A549 (cell line): ENCODE measurements at regions of chr7 and their contacts with region 1.

Region 1: DNA sequence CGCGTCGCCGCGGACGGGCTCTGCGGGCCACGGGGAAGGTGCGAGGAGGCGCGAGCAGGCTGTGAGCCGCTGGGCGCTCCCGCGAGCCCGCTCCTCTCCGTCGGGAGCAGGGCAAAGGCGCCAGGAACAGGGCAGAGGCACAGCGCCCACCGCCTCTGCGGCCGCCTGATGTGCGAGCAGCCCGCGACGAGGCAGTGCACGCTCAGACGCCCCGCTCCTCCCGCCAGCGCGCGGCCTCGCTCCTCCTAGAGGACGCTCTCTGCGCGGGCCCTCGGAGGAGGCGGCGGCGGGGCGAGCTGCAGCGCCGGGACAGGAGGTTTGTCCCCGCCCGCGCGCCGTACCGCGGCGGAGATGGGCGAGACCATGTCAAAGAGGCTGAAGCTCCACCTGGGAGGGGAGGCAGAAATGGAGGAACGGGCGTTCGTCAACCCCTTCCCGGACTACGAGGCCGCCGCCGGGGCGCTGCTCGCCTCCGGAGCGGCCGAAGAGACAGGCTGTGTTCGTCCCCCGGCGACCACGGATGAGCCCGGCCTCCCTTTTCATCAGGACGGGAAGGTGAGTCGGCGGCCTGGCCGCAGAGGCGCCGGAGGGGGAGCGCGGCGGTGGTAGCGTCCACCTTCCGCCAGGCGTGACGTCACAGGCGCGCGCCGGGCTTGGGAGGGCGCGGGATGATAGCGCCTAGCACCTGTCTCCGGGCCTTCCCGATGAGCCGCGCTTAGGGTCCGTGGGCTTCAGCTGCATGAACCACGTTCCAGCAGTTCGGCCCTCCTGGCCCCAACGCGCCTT is 731 bp downstream of the LANCL2 start:
- DNase-seq: peak; percentile 76 to 98
- ATAC-seq: peak; percentile 94 to 95
- H3K4me3 ChIP-seq: peak overlapping the region; percentile 83
- H3K27ac ChIP-seq: peak overlapping the region; percentile 99
- H3K4me1 ChIP-seq: peaks cover 13% of the 10 kb centered on the region
- CTCF ChIP-seq: no peak
- EP300 ChIP-seq: no peak
- POLR2A ChIP-seq: peak; percentile 89
- RAD21 ChIP-seq: no peak

Region 2: DNA sequence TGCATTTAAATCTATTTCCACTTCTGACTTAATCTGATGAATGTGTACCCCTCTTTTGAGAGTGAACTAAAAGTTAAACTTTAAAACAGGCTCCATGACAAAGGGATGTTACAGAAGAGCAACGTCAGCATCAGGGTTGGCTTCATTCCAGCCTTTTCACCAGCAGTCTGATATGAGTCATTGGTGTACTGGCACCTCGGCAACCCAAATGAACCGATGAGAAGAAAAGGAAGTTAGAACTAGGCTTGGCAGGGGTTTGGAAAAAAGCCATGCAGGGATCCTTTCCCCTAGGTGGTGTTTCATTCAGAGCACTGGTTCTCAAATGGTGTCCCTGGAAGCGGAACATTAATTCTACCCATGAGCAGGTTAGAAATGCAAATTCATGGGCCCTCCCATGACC is 660.4 kb before region 1 on chr7:
- CTCF ChIA-PET with region 1: no interaction called
- POLR2A ChIA-PET with region 1: no interaction called
- DNase-seq: peak; percentile 51 to 78
- ATAC-seq: peak; percentile 69 to 85; a peak in 5 of 6 replicates
- H3K4me3 ChIP-seq: no peak overlapping the region
- H3K27ac ChIP-seq: no peak overlapping the region
- H3K4me1 ChIP-seq: peaks cover 9% of the 10 kb centered on the region; the same call in 2 of the 3 replicates
- CTCF ChIP-seq: no peak
- EP300 ChIP-seq: no peak
- POLR2A ChIP-seq: no peak
- RAD21 ChIP-seq: no peak

Region 3: GRCh38 chr7:54758702-54759592 is 606.9 kb before region 1 on chr7 and contains the start of gene SEC61G:
- CTCF ChIA-PET with region 1: no interaction called
- POLR2A ChIA-PET with region 1: interaction called, 13 read pairs
- DNase-seq: peak; percentile 93 to 97
- ATAC-seq: peak; percentile 93 to 97
- H3K4me3 ChIP-seq: peak within 1 kb of the TSS; percentile 79
- H3K27ac ChIP-seq: peak within 1 kb of the TSS; percentile 93 to 100
- H3K4me1 ChIP-seq: peaks cover 13% of the 10 kb centered on the region; the same call in 2 of the 3 replicates
- CTCF ChIP-seq: no peak
- EP300 ChIP-seq: no peak
- POLR2A ChIP-seq: peak; percentile 84
- RAD21 ChIP-seq: no peak
- polyA plus RNA-seq, gene SEC61G: 290 and 356 TPM in 2 replicates

Region 4: GRCh38 chr7:55288070-55288824 is 77.6 kb before region 1 on chr7:
- CTCF ChIA-PET with region 1: interaction called, 4 read pairs
- POLR2A ChIA-PET with region 1: interaction called, 12 read pairs
- DNase-seq: no peak
- ATAC-seq: 0 out of 6 replicates have a peak, but pooled peaks of 1 of the 2 experiments have one; percentile 50
- H3K4me3 ChIP-seq: no peak overlapping the region
- H3K27ac ChIP-seq: no peak overlapping the region
- H3K4me1 ChIP-seq: no peaks in the 10 kb centered on the region
- CTCF ChIP-seq: no peak
- EP300 ChIP-seq: no peak
- POLR2A ChIP-seq: no peak
- RAD21 ChIP-seq: no peak

Region 5: DNA sequence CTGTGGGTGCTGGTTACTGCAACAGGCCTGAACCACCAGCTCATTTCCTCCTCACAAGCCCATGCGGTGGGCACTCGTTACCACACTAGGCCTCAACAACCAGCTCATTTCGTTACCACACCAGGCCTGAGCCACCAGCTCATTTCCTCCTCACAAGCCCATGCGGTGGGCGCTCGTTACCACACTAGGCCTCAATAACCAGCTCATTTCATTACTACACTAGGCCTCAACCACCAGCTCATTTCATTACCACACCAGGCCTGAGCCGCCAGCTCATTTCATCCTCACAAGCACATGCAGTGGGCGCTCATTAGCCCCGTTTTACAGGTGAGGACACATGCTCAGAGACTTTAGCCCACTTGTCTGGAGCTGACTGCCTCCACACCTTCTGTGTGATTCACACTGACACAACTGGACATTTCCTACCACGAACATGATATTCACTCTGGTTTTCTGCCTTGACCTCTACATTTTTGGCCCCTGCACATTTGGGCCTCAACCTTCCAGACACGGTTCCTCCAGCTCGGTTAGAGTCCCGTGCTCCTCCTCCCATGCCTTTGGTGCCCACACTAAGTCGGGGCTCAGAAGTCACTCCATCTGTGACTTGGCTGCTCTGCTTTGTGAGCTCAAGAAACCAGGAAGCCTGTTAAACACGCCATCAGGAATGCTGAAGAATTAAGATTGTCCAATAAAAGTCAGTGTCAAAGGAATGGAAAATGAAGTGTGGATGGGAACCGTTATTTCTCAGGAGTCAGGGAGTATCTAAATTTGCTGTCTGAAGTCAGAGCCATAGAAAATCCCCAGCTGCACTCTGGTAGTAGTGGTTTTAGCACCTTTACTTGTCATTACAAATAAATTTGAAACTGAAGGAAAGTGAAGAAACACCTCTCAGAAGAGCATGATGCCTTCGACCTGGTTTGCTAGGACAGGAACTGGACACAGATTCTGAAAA is 56.6 kb before region 1 on chr7:
- CTCF ChIA-PET with region 1: no interaction called
- POLR2A ChIA-PET with region 1: interaction called, 12 read pairs
- DNase-seq: no peak
- ATAC-seq: no peak
- H3K4me3 ChIP-seq: no peak overlapping the region
- H3K27ac ChIP-seq: no peak overlapping the region
- H3K4me1 ChIP-seq: no peaks in the 10 kb centered on the region
- CTCF ChIP-seq: no peak
- EP300 ChIP-seq: no peak
- POLR2A ChIP-seq: no peak
- RAD21 ChIP-seq: no peak

Region 6: GRCh38 chr7:55348499-55348898 is 17.4 kb before region 1 on chr7:
- CTCF ChIA-PET with region 1: interaction called, 5 read pairs
- POLR2A ChIA-PET with region 1: interaction called, 16 read pairs
- DNase-seq: no peak
- ATAC-seq: peak in 1 of 2 experiments; percentile 46; a peak in 2 of 6 replicates
- H3K4me3 ChIP-seq: no peak overlapping the region
- H3K27ac ChIP-seq: no peak overlapping the region
- H3K4me1 ChIP-seq: 0 out of 3 replicates have a peak, but pooled peaks cover 5% of the 10 kb centered on the region
- CTCF ChIP-seq: no peak
- EP300 ChIP-seq: no peak
- POLR2A ChIP-seq: no peak
- RAD21 ChIP-seq: no peak

Region 7: DNA sequence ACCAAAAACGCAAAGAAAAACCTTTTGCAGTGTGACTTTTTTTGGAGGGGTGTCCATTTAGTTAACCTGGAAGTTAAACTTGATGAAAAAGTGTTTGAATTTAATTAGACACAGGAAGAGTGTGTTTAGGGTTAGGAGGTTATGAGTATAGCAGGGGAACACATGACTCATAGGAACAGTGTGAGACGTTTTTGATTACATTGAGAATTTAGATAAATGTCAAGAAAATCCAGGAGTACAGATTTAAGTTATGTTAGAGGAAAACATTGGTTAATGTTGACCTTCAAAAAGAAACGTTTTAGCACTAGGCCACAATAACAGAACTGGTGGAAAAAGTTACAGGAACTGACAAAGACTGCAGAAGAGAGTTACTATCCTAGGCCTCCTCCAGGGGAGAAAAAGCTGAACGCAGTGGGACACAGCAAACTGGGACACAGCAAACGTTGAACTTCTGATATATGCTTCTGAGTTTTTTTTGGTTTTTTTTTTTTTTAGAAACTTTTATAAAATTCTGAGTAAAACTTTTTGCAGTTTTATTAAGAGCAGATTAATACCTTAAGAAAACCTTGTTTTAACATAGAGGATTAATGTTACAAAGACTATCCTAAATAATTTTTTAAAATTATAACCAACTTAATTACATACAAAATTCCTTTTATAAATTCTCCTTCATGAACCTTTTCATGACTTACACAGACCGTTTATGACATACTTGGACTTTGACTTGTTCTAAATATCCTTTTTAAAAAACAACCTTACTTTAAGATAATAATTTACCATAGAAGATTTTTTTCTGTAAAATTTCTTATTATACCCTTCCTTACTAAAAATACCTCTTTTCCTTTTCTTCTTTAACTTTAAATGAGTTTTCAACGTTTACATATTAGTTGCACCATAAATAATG is 21.4 kb after region 1 on chr7:
- CTCF ChIA-PET with region 1: no interaction called
- POLR2A ChIA-PET with region 1: no interaction called
- DNase-seq: peak in 1 of 2 experiments; percentile 44
- ATAC-seq: no peak
- H3K4me3 ChIP-seq: no peak overlapping the region
- H3K27ac ChIP-seq: no peak overlapping the region
- H3K4me1 ChIP-seq: no peaks in the 10 kb centered on the region
- CTCF ChIP-seq: no peak
- EP300 ChIP-seq: no peak
- POLR2A ChIP-seq: no peak
- RAD21 ChIP-seq: no peak